ENCODE measurements at regions of chr6 and their contacts with region 1.

Region 1: DNA sequence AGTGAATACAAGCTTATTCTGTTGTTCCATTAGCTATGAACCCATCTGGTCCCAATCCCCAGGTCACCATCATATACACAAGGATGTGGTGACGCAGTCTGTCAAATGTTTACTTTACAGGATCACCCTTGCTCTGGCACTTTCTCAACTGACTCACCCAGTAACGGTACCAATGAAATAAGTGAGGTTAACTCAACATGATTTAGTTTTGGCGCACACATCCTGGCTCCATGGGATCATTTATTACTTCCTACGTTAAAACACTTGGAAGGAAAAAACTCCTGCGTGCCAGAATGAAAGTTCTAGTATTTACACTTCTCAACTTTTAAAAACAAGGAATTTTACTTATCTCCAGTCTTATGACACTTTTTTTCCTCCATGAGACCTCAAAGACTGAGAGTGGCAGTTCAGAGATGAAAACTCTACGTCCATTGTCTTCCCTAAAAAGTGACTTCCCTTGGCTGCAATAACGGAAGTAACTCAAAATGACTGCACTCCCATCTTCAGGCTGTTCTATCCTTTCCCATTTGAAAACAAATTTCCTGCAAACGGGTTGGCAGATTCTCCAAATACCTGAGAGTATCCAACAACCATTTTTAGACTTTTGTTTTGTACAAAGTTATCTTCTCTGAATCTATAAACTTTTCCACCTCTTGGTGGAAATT is 15.9 kb downstream of the AGPAT4 start:
- DNase-seq: peak; percentile 99
- ATAC-seq: peak; percentile 77
- H3K4me3 ChIP-seq: no peak overlapping the region; the same call in 1 of the 2 replicates
- H3K27ac ChIP-seq: peak overlapping the region; percentile 56; the same call in 1 of the 2 replicates
- H3K4me1 ChIP-seq: peaks cover 12% of the 10 kb centered on the region
- H3K27me3 ChIP-seq: no peaks in the 10 kb centered on the region
- CTCF ChIP-seq: 0 out of 2 replicates have a peak, but pooled peaks have one; percentile 2
- POLR2A ChIP-seq: peak; percentile 25; the same call in 1 of the 2 replicates
- RAD21 ChIP-seq: peak; percentile 15; the same call in 1 of the 2 replicates

Region 2: GRCh38 chr6:161215193-161215592 is 42.7 kb before region 1 on chr6:
- CTCF ChIA-PET with region 1: no interaction called
- POLR2A ChIA-PET with region 1: no interaction called
- dilution Hi-C with region 1: no loop called
- in situ Hi-C with region 1: no loop called
- intact Hi-C with region 1: loop called (anchors 1 kb)
- DNase-seq: peak; percentile 100
- ATAC-seq: peak; percentile 99
- H3K4me3 ChIP-seq: no peak overlapping the region
- H3K27ac ChIP-seq: no peak overlapping the region
- H3K4me1 ChIP-seq: peaks cover 6% of the 10 kb centered on the region
- H3K27me3 ChIP-seq: no peaks in the 10 kb centered on the region
- CTCF ChIP-seq: no peak
- POLR2A ChIP-seq: peak; percentile 52; the same call in 1 of the 2 replicates
- RAD21 ChIP-seq: peak; percentile 15; the same call in 1 of the 2 replicates

Region 3: DNA sequence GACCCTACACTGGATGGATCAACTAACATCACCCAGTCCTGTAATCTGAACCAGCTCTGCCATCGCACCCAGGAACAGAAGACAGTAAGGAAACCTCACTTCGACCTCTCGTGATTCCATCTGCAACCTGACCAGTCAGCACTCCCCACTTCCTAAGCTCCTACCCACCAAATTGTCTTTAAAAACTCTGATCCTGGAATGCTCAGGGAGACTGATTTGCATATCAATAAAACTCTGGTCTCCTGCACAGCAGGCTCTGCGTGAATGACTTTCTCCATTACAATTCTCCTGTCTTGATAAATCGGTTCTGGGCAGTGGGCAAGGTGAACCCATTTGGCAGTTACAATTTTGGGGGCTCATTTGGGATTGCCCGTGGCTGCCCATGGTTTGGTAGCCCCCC is 34.2 kb after region 1 on chr6:
- CTCF ChIA-PET with region 1: no interaction called
- POLR2A ChIA-PET with region 1: no interaction called
- dilution Hi-C with region 1: no loop called
- in situ Hi-C with region 1: no loop called
- intact Hi-C with region 1: no loop called
- DNase-seq: no peak
- ATAC-seq: no peak
- H3K4me3 ChIP-seq: no peak overlapping the region
- H3K27ac ChIP-seq: no peak overlapping the region
- H3K4me1 ChIP-seq: no peaks in the 10 kb centered on the region
- H3K27me3 ChIP-seq: peaks cover 2% of the 10 kb centered on the region; the same call in 1 of the 2 replicates
- CTCF ChIP-seq: no peak
- POLR2A ChIP-seq: no peak
- RAD21 ChIP-seq: no peak

Region 4: GRCh38 chr6:162251257-162251656 is 993.3 kb after region 1 on chr6:
- CTCF ChIA-PET with region 1: no interaction called
- POLR2A ChIA-PET with region 1: no interaction called
- dilution Hi-C with region 1: no loop called
- in situ Hi-C with region 1: no loop called
- intact Hi-C with region 1: no loop called
- DNase-seq: no peak
- ATAC-seq: no peak
- H3K4me3 ChIP-seq: no peak overlapping the region
- H3K27ac ChIP-seq: no peak overlapping the region
- H3K4me1 ChIP-seq: no peaks in the 10 kb centered on the region
- H3K27me3 ChIP-seq: no peaks in the 10 kb centered on the region
- CTCF ChIP-seq: no peak
- POLR2A ChIP-seq: no peak
- RAD21 ChIP-seq: no peak